ENCODE measurements at regions of chr13 and their contacts with region 1.

Region 1: GRCh38 chr13:31286930-31287329 is 87.2 kb downstream of the B3GLCT start:
- DNase-seq: no peak
- ATAC-seq: no peak
- H3K4me3 ChIP-seq: no peak overlapping the region
- H3K27ac ChIP-seq: no peak overlapping the region
- H3K4me1 ChIP-seq: no peaks in the 10 kb centered on the region
- H3K27me3 ChIP-seq: no peaks in the 10 kb centered on the region
- CTCF ChIP-seq: no peak
- POLR2A ChIP-seq: no peak

Region 2: GRCh38 chr13:31044377-31045285 is 242.3 kb before region 1 on chr13:
- in situ Hi-C with region 1: no loop called
- intact Hi-C with region 1: no loop called
- DNase-seq: peak; percentile 33 to 52
- ATAC-seq: peak; percentile 65 to 80
- H3K4me3 ChIP-seq: no peak overlapping the region
- H3K27ac ChIP-seq: no peak overlapping the region
- H3K4me1 ChIP-seq: peaks cover 0 to 4% of the 10 kb centered on the region in 2 donors
- H3K27me3 ChIP-seq: peaks cover 0 to 3% (median 0%) of the 10 kb centered on the region in 3 donors
- CTCF ChIP-seq: peak; percentile 50 to 92 (median 72)
- POLR2A ChIP-seq: no peak

Region 3: DNA sequence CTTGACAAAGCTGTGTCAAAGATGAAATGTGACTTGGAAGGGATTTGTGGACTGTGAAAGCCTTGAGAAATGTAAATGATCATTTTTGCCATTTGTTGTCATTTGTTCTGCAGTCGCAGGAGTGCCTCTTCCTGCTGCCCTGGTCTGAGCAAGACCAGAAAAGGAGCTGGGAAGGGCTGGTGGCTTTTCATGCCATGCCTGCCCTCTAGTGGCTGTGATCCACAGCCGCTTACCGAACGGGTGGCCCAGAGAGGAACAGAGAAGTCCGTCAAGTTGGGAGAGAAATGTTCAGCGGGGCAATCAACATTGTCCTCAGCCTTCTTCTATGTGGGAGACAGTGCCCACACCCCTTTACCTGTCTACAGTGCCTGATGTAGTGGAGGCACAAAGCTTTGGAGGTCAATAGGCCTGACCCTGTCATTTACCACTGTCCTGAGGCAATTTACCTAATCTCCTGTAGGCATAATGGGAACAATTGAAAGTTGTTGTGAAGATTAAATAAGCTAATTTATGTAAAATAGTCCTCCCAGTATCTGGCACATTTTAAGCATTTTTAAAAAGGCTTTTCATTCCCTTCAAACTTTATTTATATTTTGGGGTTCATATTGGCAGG is 137.3 kb after region 1 on chr13:
- in situ Hi-C with region 1: no loop called
- intact Hi-C with region 1: loop called (anchors 5 kb)
- DNase-seq: peak; percentile 43 to 66
- ATAC-seq: peak; percentile 89 to 95
- H3K4me3 ChIP-seq: no peak overlapping the region
- H3K27ac ChIP-seq: no peak overlapping the region
- H3K4me1 ChIP-seq: no peaks in the 10 kb centered on the region
- H3K27me3 ChIP-seq: no peaks in the 10 kb centered on the region
- CTCF ChIP-seq: peak; percentile 50 to 87 (median 67)
- POLR2A ChIP-seq: no peak

Measured in gastrocnemius medialis (tissue), 4 donors.